ENCODE measurements at regions of chr6 and their contacts with region 1.

Region 1: DNA sequence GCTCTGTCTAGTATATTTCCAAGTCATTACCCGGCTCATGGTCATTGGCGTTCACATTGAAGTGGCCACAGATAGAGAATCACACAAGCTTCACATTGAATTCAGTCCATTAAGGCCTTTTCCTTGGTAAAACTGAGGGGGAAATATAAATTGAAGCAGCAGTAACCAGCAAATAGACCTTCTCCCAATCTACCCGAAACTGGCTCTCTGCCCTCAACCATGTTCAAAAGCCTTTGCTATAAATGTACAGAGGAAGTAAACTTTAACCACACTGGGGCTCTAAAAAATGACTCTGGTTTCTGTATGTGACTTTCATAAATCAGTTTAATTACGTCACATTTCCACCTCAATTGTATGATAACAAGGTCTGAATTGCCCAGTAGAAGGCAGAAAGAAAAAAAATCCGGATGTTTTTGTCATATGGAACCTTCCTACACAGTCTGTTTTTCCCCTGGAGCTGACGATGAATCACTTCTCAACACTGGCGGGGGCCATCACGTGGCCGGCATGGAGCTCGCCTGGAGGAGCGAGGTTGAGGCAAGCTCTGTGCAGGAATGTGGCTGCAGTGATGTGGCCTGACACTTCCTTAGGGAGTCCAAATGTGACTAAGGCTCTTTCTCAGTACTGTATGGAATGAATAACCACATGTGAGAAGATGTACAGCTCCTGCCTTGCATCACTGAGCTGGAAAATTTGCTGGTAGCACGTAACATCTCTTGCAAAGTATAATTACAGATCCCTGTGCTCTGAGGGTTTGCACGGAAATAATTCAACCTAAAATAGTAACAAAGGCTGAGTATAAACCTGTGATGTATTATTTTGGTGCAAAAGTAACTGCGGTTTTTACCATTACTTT is 58.6 kb upstream of the SNX9 start:
- DNase-seq: peak; percentile 84
- H3K4me3 Mint-ChIP-seq: peak overlapping the region; percentile 49
- H3K27ac Mint-ChIP-seq: peak overlapping the region; percentile 82
- H3K4me1 Mint-ChIP-seq: peaks cover 73% of the 10 kb centered on the region
- H3K27me3 Mint-ChIP-seq: peaks cover 18% of the 10 kb centered on the region

Region 2: DNA sequence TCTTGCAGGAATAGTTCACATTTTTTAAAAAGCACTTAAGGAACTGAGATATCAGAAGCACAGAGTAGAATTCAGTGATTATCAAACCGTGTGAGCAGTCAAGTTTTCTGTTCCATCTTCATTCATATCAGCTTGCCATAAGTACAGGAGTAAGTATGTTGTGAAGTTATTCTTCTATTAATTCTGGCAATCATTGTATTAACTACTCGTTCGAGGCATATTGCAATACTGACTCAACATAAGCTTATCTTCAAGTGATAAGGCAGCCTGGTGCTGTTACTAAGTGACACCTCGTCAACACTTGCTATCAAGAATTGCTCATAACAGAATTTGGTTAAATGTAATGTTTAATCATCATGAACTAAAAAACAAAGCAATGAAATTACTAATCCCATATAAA is 17.0 kb before region 1 on chr6:
- CTCF ChIA-PET with region 1: no interaction called
- POLR2A ChIA-PET with region 1: no interaction called
- DNase-seq: no peak
- H3K4me3 Mint-ChIP-seq: no peak overlapping the region
- H3K27ac Mint-ChIP-seq: no peak overlapping the region
- H3K4me1 Mint-ChIP-seq: peaks cover 4% of the 10 kb centered on the region
- H3K27me3 Mint-ChIP-seq: peaks cover 14% of the 10 kb centered on the region

Region 3: DNA sequence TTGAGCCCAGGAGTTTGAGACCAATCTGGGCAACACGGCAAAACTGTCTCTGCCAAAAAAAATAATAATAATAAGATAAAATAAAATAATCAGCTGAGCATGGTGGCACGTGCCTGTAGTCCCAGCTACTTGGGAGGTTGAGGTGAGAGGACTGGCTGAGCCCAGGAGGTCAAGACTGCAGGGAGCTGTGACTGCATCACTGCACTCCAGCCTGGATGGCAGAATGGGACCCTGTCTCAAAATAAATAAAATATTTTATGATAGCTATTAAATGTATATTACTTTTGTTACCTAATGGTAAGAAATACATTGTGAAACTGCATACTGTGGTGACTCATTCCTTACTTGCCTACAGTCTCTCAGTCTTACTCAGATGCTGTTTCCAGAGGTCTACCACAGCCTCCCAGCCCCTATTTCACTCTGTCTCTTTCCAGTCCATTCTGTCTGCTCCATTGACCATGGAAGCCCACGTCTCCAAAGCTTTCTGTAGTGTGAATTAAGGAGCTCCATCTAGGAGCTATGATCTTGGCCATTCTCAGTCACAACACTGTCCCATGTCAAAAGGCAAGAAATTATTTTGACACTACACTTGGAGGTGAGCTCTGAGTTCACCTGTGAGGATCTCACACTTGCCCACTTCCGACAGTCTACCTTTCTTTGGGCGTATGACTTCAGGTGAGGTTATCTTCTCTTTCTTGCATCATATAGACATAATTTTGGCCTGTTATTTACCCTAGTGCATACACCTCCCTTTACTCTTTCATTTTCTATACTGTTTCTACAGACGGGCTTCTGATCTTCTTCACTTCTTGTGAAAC is 36.2 kb after region 1 on chr6:
- CTCF ChIA-PET with region 1: interaction called, 3 read pairs
- POLR2A ChIA-PET with region 1: interaction called, 16 read pairs
- DNase-seq: peak; percentile 56
- H3K4me3 Mint-ChIP-seq: peak overlapping the region; percentile 7
- H3K27ac Mint-ChIP-seq: peak overlapping the region; percentile 27
- H3K4me1 Mint-ChIP-seq: peaks cover 27% of the 10 kb centered on the region
- H3K27me3 Mint-ChIP-seq: peaks cover 36% of the 10 kb centered on the region

Region 4: DNA sequence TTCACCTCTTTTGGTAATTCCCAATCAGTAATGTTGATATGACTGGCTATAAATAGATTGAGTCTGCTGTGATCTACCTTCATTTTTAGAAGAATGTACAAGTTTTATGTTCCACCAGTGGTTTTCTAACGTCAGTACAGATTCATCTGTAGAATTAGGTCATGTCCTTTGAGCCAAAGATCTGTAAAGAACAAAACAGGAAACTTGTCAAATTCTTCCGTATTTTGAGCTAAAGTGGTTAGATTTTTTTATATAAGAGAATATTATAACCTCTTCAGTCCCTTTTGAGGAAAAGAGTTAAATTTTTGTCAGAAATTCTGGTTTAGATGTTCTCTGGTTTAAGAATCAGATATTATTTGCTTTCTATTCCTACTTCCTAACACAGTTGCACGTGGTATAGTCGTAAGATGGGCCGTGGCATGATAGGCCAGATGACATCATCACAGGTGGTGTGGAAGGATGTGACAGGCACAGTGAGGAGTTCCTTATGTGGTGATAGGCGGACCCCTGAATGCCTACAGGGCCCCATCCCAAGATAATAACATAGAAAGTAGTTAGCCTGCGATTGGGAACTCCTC is 120.9 kb after region 1 on chr6:
- CTCF ChIA-PET with region 1: no interaction called
- POLR2A ChIA-PET with region 1: interaction called, 18 read pairs
- DNase-seq: peak; percentile 68
- H3K4me3 Mint-ChIP-seq: peak overlapping the region; percentile 2
- H3K27ac Mint-ChIP-seq: peak overlapping the region; percentile 77
- H3K4me1 Mint-ChIP-seq: peaks cover 56% of the 10 kb centered on the region
- H3K27me3 Mint-ChIP-seq: no peaks in the 10 kb centered on the region

Measured in activated CD4-positive, alpha-beta memory T cell treated with anti-CD3 and anti-CD28 coated beads, Interleukin-2, amount 10 ng/mL, durations not matched to agents 7 days and 5 days (primary cell).